HCT116 (cell line): ENCODE measurements at regions of chr10 and their contacts with region 1.

Region 1: GRCh38 chr10:112490545-112490944 is 43.5 kb downstream of the VTI1A start:
- DNase-seq: peak; percentile 97
- ATAC-seq: peak; percentile 80
- H3K4me3 ChIP-seq: peak overlapping the region in 1 of 2 experiments; percentile 5; a peak in 1 of 4 replicates
- H3K27ac ChIP-seq: peak overlapping the region; percentile 86
- H3K4me1 ChIP-seq: peaks cover 94 to 99% of the 10 kb centered on the region in 2 experiments
- H3K27me3 ChIP-seq: no peaks in the 10 kb centered on the region
- CTCF ChIP-seq: no peak
- POLR2A ChIP-seq: no peak
- RAD21 ChIP-seq: no peak; the same call in 1 of the 2 replicates

Region 2: GRCh38 chr10:112507046-112507445 is 16.5 kb after region 1 on chr10:
- CTCF ChIA-PET with region 1: interaction called, 4 read pairs
- POLR2A ChIA-PET with region 1: interaction called, 27 read pairs
- RAD21 ChIA-PET with region 1: no interaction called
- intact Hi-C with region 1: no loop called
- DNase-seq: no peak
- ATAC-seq: peak; percentile 26; the same call in 1 of the 2 replicates
- H3K4me3 ChIP-seq: no peak overlapping the region
- H3K27ac ChIP-seq: peak overlapping the region; percentile 72
- H3K4me1 ChIP-seq: peaks cover 57 to 76% of the 10 kb centered on the region in 2 experiments
- H3K27me3 ChIP-seq: no peaks in the 10 kb centered on the region
- CTCF ChIP-seq: no peak
- POLR2A ChIP-seq: no peak
- RAD21 ChIP-seq: no peak

Region 3: DNA sequence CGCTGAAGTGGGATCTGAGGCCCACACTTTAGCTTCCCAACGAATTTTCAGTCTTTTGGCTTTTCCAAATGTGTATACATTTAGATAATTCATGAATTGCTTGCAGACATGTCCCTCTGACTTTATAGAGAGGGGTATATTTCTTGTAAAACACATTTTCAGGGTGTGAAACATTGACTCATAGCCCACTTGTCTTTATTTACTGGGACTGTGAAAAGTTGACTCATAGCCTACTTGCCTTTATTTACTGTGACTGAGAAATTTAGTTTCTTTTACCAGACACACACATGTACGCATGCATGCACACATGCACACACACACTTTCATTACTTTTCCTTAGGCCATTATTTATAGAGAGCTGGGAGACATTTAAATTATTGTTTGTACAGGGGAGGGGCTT is 35.6 kb after region 1 on chr10:
- CTCF ChIA-PET with region 1: no interaction called
- POLR2A ChIA-PET with region 1: interaction called, 44 read pairs
- RAD21 ChIA-PET with region 1: interaction called in 1 of 2 experiments, 3 read pairs
- intact Hi-C with region 1: no loop called
- DNase-seq: no peak
- ATAC-seq: peak; percentile 5; the same call in 1 of the 2 replicates
- H3K4me3 ChIP-seq: peak overlapping the region in 1 of 2 experiments; percentile 33; a peak in 2 of 4 replicates
- H3K27ac ChIP-seq: peak overlapping the region; percentile 90
- H3K4me1 ChIP-seq: peaks cover 95 to 100% of the 10 kb centered on the region in 2 experiments
- H3K27me3 ChIP-seq: no peaks in the 10 kb centered on the region
- CTCF ChIP-seq: no peak
- POLR2A ChIP-seq: peak; percentile 54
- RAD21 ChIP-seq: no peak

Region 4: DNA sequence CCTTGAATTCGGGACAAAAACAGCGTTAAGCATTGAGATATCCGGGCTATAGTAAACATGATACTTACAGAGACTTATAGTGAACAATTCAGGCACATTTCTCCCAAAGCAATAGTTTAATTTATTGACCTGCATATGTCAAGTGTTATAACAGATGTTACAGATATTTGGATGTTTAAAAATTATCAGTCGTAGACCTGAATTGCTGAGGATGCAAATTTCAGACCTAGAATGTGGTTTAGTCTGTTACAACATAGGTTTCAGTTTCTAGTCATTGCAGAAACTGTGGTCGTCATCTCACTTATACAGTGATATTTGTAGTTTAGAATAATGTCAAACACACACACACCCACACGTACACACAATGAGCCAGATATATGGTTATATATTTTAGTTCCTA is 41.6 kb after region 1 on chr10:
- CTCF ChIA-PET with region 1: interaction called, 6 read pairs
- POLR2A ChIA-PET with region 1: interaction called, 44 read pairs
- RAD21 ChIA-PET with region 1: no interaction called
- intact Hi-C with region 1: no loop called
- DNase-seq: no peak
- ATAC-seq: no peak
- H3K4me3 ChIP-seq: peak overlapping the region; percentile 24 to 52
- H3K27ac ChIP-seq: peak overlapping the region; percentile 90
- H3K4me1 ChIP-seq: peaks cover 92 to 99% of the 10 kb centered on the region in 2 experiments
- H3K27me3 ChIP-seq: no peaks in the 10 kb centered on the region
- CTCF ChIP-seq: no peak
- POLR2A ChIP-seq: no peak
- RAD21 ChIP-seq: no peak

Region 5: GRCh38 chr10:113692267-113692666 is 1201.7 kb after region 1 on chr10:
- CTCF ChIA-PET with region 1: no interaction called
- POLR2A ChIA-PET with region 1: no interaction called
- RAD21 ChIA-PET with region 1: no interaction called
- intact Hi-C with region 1: no loop called
- DNase-seq: no peak
- ATAC-seq: no peak
- H3K4me3 ChIP-seq: no peak overlapping the region
- H3K27ac ChIP-seq: no peak overlapping the region
- H3K4me1 ChIP-seq: no peaks in the 10 kb centered on the region
- H3K27me3 ChIP-seq: no peaks in the 10 kb centered on the region
- CTCF ChIP-seq: no peak
- POLR2A ChIP-seq: no peak
- RAD21 ChIP-seq: no peak